Mammary epithelial cell (primary cell): ENCODE measurements at regions of chr1 and their contacts with region 1.

Region 1: GRCh38 chr1:153040950-153041631 is at the start of gene SPRR2D:
- DNase-seq: peak; percentile 54
- H3K4me3 ChIP-seq: no peak within 1 kb of the TSS
- H3K27ac ChIP-seq: no peak within 1 kb of the TSS
- H3K4me1 ChIP-seq: peaks cover 4% of the 10 kb centered on the region
- H3K27me3 ChIP-seq: no peaks in the 10 kb centered on the region
- CTCF ChIP-seq: no peak
- total RNA-seq, gene SPRR2D: 13.8 TPM in 1 of 2 donors, not detected in the other

Region 2: GRCh38 chr1:152811050-152811449 is 230.0 kb before region 1 on chr1:
- CTCF ChIA-PET with region 1: no interaction called
- dilution Hi-C with region 1: no loop called
- in situ Hi-C with region 1: no loop called
- intact Hi-C with region 1: no loop called
- DNase-seq: peak; percentile 79
- H3K4me3 ChIP-seq: no peak overlapping the region
- H3K27ac ChIP-seq: no peak overlapping the region
- H3K4me1 ChIP-seq: peaks cover 20% of the 10 kb centered on the region
- H3K27me3 ChIP-seq: no peaks in the 10 kb centered on the region
- CTCF ChIP-seq: no peak

Region 3: GRCh38 chr1:152954434-152954833 is 86.7 kb before region 1 on chr1:
- CTCF ChIA-PET with region 1: no interaction called
- dilution Hi-C with region 1: loop called (anchors 5 kb)
- in situ Hi-C with region 1: no loop called
- intact Hi-C with region 1: no loop called
- DNase-seq: peak; percentile 97
- H3K4me3 ChIP-seq: peak overlapping the region in 2 of 3 experiments; percentile 28 to 33
- H3K27ac ChIP-seq: peak overlapping the region; percentile 94
- H3K4me1 ChIP-seq: peaks cover 35% of the 10 kb centered on the region
- H3K27me3 ChIP-seq: no peaks in the 10 kb centered on the region
- CTCF ChIP-seq: no peak

Region 4: GRCh38 chr1:153140484-153140883 is 99.4 kb after region 1 on chr1:
- CTCF ChIA-PET with region 1: no interaction called
- dilution Hi-C with region 1: no loop called
- in situ Hi-C with region 1: no loop called
- intact Hi-C with region 1: no loop called
- DNase-seq: no peak
- H3K4me3 ChIP-seq: no peak overlapping the region
- H3K27ac ChIP-seq: no peak overlapping the region
- H3K4me1 ChIP-seq: no peaks in the 10 kb centered on the region
- H3K27me3 ChIP-seq: no peaks in the 10 kb centered on the region
- CTCF ChIP-seq: no peak

Region 5: GRCh38 chr1:153150846-153151245 is 109.8 kb after region 1 on chr1 and contains the start of gene SPRR2G:
- CTCF ChIA-PET with region 1: no interaction called
- dilution Hi-C with region 1: loop called (anchors 5 kb)
- in situ Hi-C with region 1: no loop called
- intact Hi-C with region 1: no loop called
- DNase-seq: no peak
- H3K4me3 ChIP-seq: no peak within 1 kb of the TSS
- H3K27ac ChIP-seq: no peak within 1 kb of the TSS
- H3K4me1 ChIP-seq: no peaks in the 10 kb centered on the region
- H3K27me3 ChIP-seq: no peaks in the 10 kb centered on the region
- CTCF ChIP-seq: no peak
- total RNA-seq, gene SPRR2G: not detected